A549 (cell line): ENCODE measurements at regions of chr6 and their contacts with region 1.

Region 1: DNA sequence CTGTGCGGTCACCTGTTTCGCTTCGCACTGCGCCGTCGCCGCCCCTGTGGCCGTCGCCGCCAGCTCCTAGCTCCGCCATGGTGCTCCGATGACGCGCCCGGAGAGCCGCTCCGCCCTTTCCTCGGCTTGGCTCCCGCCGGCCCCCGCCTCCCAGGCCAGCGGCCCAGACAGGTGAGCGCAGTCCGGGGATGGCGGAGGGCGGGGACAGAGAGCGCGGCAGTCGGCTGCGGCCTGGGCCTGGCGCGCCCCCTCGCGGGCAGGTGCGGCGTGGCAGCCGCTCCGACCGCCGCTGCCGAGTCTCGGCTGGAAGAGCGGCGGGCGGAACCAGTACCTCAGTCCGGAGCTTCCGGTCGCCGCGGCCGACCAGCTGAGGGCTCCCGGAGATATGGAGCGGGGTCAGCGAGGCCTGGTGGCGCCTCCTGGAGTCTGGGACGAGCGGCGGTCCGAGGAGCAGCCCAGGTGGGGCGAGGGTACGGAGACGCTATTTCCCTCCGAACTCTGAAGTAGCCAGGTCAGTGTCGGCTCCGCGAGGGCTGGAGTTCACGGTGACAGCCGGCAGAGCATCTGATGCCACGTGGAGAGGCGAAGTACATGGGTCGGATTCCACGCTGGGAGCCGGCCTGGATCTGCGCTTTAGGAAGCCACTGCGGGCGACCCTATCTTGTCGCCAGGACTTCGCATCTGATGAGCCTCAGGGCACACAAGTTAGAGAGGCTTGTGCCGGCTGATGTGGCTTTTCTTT is at the start of gene MAP7:
- DNase-seq: peak; percentile 58 to 80
- ATAC-seq: peak; percentile 90 to 94
- H3K4me3 ChIP-seq: peak within 1 kb of the TSS; percentile 98
- H3K27ac ChIP-seq: peak within 1 kb of the TSS; percentile 93 to 97
- H3K4me1 ChIP-seq: peaks cover 36% of the 10 kb centered on the region
- CTCF ChIP-seq: peak; percentile 87
- EP300 ChIP-seq: no peak
- POLR2A ChIP-seq: peak; percentile 44
- RAD21 ChIP-seq: peak; percentile 63 to 89; a peak in 4 of 5 replicates
- polyA plus RNA-seq, gene MAP7: 49.0 and 64.5 TPM in 2 replicates

Region 2: GRCh38 chr6:136289579-136290409 is 260.7 kb before region 1 on chr6 and contains the start of gene BCLAF1:
- CTCF ChIA-PET with region 1: interaction called, 3 read pairs
- POLR2A ChIA-PET with region 1: interaction called, 13 read pairs
- DNase-seq: peak; percentile 76 to 98
- ATAC-seq: peak; percentile 94
- H3K4me3 ChIP-seq: peak within 1 kb of the TSS; percentile 99
- H3K27ac ChIP-seq: peak within 1 kb of the TSS; percentile 99 to 100
- H3K4me1 ChIP-seq: peaks cover 22% of the 10 kb centered on the region
- CTCF ChIP-seq: no peak
- EP300 ChIP-seq: no peak
- POLR2A ChIP-seq: peak; percentile 82
- RAD21 ChIP-seq: no peak
- polyA plus RNA-seq, gene BCLAF1: 88.4 and 122 TPM in 2 replicates

Region 3: DNA sequence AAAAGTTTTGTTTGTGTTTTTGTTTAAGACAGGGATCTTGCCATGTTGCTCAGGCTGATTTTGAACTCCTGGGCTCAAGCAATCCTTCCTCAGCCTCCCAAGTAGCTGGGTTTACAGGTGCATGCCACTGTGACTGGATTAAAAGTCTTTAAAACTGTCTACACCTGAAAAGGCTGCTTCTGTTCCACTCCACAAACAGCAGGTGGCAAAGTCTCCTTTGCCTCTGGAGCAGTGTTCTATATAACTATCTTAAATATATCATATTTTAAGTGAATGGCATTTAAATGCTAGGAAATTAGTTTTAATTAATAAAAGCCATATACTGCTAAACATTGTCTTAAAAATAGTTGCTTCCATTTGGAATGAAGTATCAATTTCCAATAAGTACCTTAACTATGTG is 171.6 kb before region 1 on chr6:
- CTCF ChIA-PET with region 1: interaction called, 13 read pairs
- POLR2A ChIA-PET with region 1: no interaction called
- DNase-seq: no peak
- ATAC-seq: peak; percentile 34 to 47; a peak in 3 of 6 replicates
- H3K4me3 ChIP-seq: no peak overlapping the region
- H3K27ac ChIP-seq: no peak overlapping the region
- H3K4me1 ChIP-seq: peaks cover 12% of the 10 kb centered on the region; the same call in 1 of the 3 replicates
- CTCF ChIP-seq: peak; percentile 20; the same call in 2 of the 3 replicates
- EP300 ChIP-seq: no peak
- POLR2A ChIP-seq: no peak
- RAD21 ChIP-seq: peak; percentile 28 to 39; a peak in 3 of 5 replicates

Region 4: DNA sequence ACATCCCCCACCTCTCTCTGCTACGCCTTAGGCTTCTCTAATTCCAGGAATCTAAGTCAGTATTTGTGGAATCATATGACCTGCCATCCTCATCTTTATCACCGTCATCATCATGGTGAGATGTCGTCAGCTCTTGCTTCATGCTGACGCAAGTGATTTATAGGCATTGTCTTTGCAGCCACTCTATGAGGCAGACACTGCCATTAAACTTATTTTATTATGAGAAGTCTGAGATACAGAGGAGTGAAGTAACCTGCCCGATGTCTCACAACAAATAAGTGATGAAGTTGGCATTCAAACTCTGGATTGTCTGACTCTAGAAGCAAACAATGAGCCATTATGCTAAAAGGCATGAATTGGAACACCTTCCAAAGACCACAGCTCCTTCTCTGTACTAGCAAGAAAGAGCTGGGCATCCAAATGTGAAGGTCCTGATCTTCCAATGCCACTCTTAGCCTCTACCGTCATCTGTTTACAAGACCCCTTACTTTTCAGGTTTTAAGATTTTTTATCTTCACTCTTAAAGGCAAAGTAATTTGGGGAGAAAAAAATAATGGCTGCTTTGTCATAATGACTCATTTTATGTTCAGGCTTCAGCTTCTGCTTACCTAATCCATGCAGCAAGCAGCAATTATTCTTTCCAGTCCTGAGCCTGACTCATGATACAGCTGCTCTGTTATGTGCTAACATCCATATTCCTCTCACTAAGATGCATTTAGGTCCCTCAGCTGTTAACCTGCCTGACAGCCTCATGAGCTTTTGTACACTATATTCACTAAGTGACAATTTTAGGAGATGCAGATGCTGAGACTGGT is 147.1 kb before region 1 on chr6:
- CTCF ChIA-PET with region 1: interaction called, 14 read pairs
- POLR2A ChIA-PET with region 1: interaction called, 3 read pairs
- DNase-seq: peak; percentile 76 to 99
- ATAC-seq: peak; percentile 91 to 95
- H3K4me3 ChIP-seq: no peak overlapping the region
- H3K27ac ChIP-seq: peak overlapping the region; percentile 97
- H3K4me1 ChIP-seq: peaks cover 66% of the 10 kb centered on the region
- CTCF ChIP-seq: no peak
- EP300 ChIP-seq: peak; percentile 100; a peak in 4 of 5 replicates
- POLR2A ChIP-seq: no peak
- RAD21 ChIP-seq: peak; percentile 20 to 50; a peak in 4 of 5 replicates

Region 5: DNA sequence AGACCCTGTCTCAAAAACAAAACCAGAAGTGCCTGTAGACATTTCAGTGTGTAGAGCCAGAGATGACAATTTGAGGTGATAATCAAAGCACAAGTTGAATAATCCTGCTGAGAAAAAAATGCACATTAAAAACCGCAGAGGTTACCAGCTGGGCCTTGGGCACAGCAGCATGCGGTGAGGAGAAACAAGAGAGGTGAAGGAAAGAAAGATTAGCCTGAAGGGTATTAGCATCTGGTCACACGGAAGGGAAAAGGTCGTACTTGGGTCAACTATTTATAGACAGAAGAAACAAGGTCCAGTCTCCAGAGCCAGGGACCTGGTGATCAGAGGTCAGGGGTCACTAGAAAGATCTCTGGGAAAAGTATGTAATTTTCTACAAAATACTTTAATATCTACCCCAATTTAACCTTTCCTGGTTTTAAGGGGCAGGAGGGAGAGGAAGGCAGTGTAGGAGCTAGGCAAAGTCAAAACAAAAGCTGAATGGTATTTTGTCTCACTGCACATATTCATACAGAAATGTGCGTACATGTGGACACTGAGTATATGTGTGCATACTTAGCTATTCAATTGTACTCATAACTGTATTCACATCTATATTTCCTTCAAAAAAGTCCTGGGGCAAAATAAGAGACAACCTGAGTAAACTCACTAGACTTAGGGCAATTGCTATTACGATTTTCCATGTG is 10.4 kb before region 1 on chr6:
- CTCF ChIA-PET with region 1: interaction called, 20 read pairs
- POLR2A ChIA-PET with region 1: no interaction called
- DNase-seq: no peak
- ATAC-seq: no peak; a peak in 1 of 6 replicates
- H3K4me3 ChIP-seq: no peak overlapping the region
- H3K27ac ChIP-seq: peak overlapping the region in 1 of 2 experiments; percentile 67; a peak in 3 of 6 replicates
- H3K4me1 ChIP-seq: peaks cover 61% of the 10 kb centered on the region
- CTCF ChIP-seq: no peak
- EP300 ChIP-seq: no peak
- POLR2A ChIP-seq: no peak
- RAD21 ChIP-seq: no peak

Region 6: DNA sequence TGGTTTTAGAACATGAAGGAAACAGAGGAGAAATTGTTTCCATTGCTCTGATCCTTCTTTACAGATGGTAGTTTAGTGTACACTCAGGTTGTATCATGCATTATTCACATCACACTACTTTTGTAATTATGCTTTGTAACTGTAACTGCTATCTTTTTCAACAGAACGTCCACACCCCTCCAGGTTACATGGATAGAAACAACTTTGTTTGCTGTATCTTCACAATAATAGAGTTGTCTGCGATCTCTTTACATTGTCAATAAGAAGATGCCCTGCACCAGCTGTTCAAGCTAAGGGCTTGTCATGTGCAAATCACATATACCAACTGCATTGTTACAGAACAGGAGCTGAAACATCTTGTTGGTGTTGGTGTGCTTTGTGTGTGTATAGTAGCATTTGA is 67.6 kb after region 1 on chr6:
- CTCF ChIA-PET with region 1: no interaction called
- POLR2A ChIA-PET with region 1: no interaction called
- DNase-seq: no peak
- ATAC-seq: no peak
- H3K4me3 ChIP-seq: no peak overlapping the region
- H3K27ac ChIP-seq: no peak overlapping the region
- H3K4me1 ChIP-seq: peaks cover 10% of the 10 kb centered on the region
- CTCF ChIP-seq: no peak
- EP300 ChIP-seq: no peak
- POLR2A ChIP-seq: no peak
- RAD21 ChIP-seq: no peak

Region 7: DNA sequence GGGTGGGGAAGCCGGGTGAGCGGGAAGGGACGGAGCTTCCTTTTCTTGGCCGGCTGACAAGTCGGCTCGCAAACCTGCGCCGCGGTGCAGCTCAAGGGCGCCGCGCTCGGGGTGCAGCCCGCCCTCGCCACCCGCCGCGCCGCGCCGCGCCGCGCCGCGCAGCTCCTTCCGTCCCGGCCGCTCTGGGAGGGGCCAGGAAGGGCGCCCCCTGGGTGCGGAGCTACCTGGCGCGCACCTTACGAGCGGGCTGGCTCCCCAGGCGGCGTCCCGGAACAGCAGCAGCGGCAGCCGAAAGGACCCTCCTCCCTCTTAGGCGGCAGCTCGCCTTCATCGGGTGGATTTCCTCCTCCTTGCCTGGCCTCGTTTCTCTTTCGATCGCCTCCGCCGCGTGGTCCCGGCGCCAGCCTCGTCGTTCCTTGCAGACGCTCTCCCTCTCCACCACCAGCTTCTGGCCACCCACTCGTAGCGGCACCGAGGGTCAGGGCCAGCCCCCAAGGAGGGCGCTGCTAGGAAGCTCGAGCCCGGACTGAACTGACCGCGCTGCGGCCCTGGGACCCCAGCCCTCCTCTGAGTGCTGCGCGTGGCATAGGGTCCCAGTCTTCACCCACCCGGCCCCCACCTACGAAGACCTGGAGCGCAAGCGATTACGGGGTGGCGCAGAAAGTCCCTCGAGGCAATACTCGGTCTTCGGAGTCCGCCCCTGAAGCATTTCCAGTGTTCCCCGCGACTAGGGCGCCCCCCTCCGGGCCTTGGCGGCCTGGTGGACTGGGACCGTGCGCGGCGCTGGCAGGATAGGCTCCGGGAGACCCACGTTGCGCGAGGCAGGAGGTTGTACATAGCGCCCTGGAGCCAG is 242.1 kb after region 1 on chr6 and contains the start of gene MAP3K5:
- CTCF ChIA-PET with region 1: interaction called, 12 read pairs
- POLR2A ChIA-PET with region 1: no interaction called
- DNase-seq: peak; percentile 36 to 84
- ATAC-seq: peak; percentile 87 to 92
- H3K4me3 ChIP-seq: peak within 1 kb of the TSS; percentile 83
- H3K27ac ChIP-seq: peak within 1 kb of the TSS; percentile 95
- H3K4me1 ChIP-seq: peaks cover 12% of the 10 kb centered on the region; the same call in 2 of the 3 replicates
- CTCF ChIP-seq: peak; percentile 57
- EP300 ChIP-seq: no peak
- POLR2A ChIP-seq: peak; percentile 30
- RAD21 ChIP-seq: peak; percentile 78 to 88
- polyA plus RNA-seq, gene MAP3K5: 4.1 and 4.4 TPM in 2 replicates